HepG2 (cell line): ENCODE measurements at regions of chr6 and their contacts with region 1.

Region 1: GRCh38 chr6:119261945-119262286 is 87.6 kb downstream of the MAN1A1 start:
- DNase-seq: peak; percentile 72
- ATAC-seq: peak; percentile 69
- H3K4me3 ChIP-seq: no peak overlapping the region; a peak in 1 of 6 replicates
- H3K27ac ChIP-seq: peak overlapping the region; percentile 80
- H3K4me1 ChIP-seq: peaks cover 86% of the 10 kb centered on the region
- H3K27me3 ChIP-seq: no peaks in the 10 kb centered on the region
- CTCF ChIP-seq: peak; percentile 54
- EP300 ChIP-seq: no peak
- POLR2A ChIP-seq: no peak
- RAD21 ChIP-seq: 0 out of 2 replicates have a peak, but pooled peaks have one; percentile 27

Region 2: GRCh38 chr6:118934461-118935330 is 327.2 kb before region 1 on chr6 and contains the start of gene MCM9:
- CTCF ChIA-PET with region 1: no interaction called
- POLR2A ChIA-PET with region 1: no interaction called
- in situ Hi-C with region 1: no loop called
- intact Hi-C with region 1: loop called (anchors 1 kb)
- DNase-seq: peak; percentile 90
- ATAC-seq: peak; percentile 98
- H3K4me3 ChIP-seq: peak within 1 kb of the TSS; percentile 77 to 99 (median 89)
- H3K27ac ChIP-seq: peak within 1 kb of the TSS; percentile 92
- H3K4me1 ChIP-seq: peaks cover 31% of the 10 kb centered on the region
- H3K27me3 ChIP-seq: no peaks in the 10 kb centered on the region; a peak in 1 of 5 replicates
- CTCF ChIP-seq: no peak
- EP300 ChIP-seq: peak in 1 of 2 experiments; percentile 22; a peak in 1 of 4 replicates
- POLR2A ChIP-seq: peak; percentile 73 to 78
- RAD21 ChIP-seq: peak; percentile 41; the same call in 1 of the 2 replicates
- total RNA-seq, gene MCM9: 11.6 and 17.2 TPM in 2 replicates

Region 3: GRCh38 chr6:119147101-119148053 is 114.5 kb before region 1 on chr6:
- CTCF ChIA-PET with region 1: no interaction called
- POLR2A ChIA-PET with region 1: interaction called, 3 read pairs
- in situ Hi-C with region 1: no loop called
- intact Hi-C with region 1: loop called (anchors 1 kb)
- DNase-seq: peak; percentile 92
- ATAC-seq: peak; percentile 82
- H3K4me3 ChIP-seq: no peak overlapping the region
- H3K27ac ChIP-seq: peak overlapping the region; percentile 46
- H3K4me1 ChIP-seq: peaks cover 59% of the 10 kb centered on the region
- H3K27me3 ChIP-seq: no peaks in the 10 kb centered on the region
- CTCF ChIP-seq: no peak
- EP300 ChIP-seq: peak in 1 of 2 experiments; percentile 85; a peak in 2 of 4 replicates
- POLR2A ChIP-seq: no peak
- RAD21 ChIP-seq: no peak

Region 4: DNA sequence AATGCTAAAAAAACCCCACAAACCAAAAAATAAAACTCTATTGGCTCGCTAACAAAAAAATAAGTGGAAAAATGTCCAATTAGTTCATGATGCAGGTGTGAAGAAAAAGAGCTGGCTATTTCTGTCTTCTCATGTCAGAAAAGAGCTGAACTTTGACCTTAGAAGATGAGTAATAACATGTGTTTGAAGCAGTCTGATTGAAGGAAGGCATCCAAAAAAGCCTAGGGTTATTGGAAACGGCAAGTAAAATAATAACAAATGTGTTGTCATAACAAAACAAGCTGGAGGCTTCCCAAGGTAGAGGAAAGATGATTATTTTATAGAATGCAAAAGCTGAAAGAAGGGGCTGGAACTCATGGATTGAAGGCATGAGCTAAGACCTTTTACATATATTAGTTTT is 89.1 kb before region 1 on chr6:
- CTCF ChIA-PET with region 1: no interaction called
- POLR2A ChIA-PET with region 1: interaction called, 7 read pairs
- in situ Hi-C with region 1: no loop called
- intact Hi-C with region 1: loop called (anchors 1 kb)
- DNase-seq: peak; percentile 67
- ATAC-seq: no peak
- H3K4me3 ChIP-seq: no peak overlapping the region
- H3K27ac ChIP-seq: peak overlapping the region; percentile 74
- H3K4me1 ChIP-seq: peaks cover 83% of the 10 kb centered on the region
- H3K27me3 ChIP-seq: no peaks in the 10 kb centered on the region
- CTCF ChIP-seq: no peak
- EP300 ChIP-seq: peak in 1 of 2 experiments; percentile 39; a peak in 1 of 4 replicates
- POLR2A ChIP-seq: no peak
- RAD21 ChIP-seq: no peak

Region 5: DNA sequence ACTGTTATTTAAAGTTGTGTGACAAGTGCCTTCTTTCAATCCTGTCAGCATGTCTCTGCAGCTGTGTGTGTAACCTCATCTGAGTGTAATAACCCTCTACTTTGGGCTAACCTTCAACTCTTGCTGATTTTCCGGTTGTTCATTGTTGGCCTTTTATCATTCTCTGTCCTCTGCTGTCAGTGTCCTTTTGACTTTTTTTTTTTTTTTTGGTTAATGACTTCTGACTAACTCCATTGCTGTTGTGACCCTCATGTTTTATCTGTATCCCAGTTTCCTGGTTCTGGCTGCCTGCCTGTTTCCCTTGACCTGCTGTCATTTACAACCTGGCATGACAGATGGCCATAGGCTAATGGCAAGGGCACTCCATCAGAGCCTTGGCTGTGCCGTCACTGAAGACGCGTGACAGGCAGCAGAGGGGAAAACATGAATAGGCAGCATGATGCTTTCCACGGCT is 233.3 kb after region 1 on chr6:
- CTCF ChIA-PET with region 1: no interaction called
- POLR2A ChIA-PET with region 1: no interaction called
- in situ Hi-C with region 1: no loop called
- intact Hi-C with region 1: loop called (anchors 1 kb)
- DNase-seq: peak; percentile 2
- ATAC-seq: peak; percentile 41
- H3K4me3 ChIP-seq: no peak overlapping the region
- H3K27ac ChIP-seq: no peak overlapping the region
- H3K4me1 ChIP-seq: peaks cover 50% of the 10 kb centered on the region
- H3K27me3 ChIP-seq: no peaks in the 10 kb centered on the region
- CTCF ChIP-seq: no peak
- EP300 ChIP-seq: no peak
- POLR2A ChIP-seq: no peak
- RAD21 ChIP-seq: no peak